ENCODE measurements at regions of chr3 and their contacts with region 1.

Region 1: GRCh38 chr3:136882572-136882971 is 20.6 kb downstream of the NCK1 start:
- DNase-seq: no peak
- ATAC-seq: peak; percentile 69
- H3K4me3 ChIP-seq: no peak overlapping the region
- H3K27ac ChIP-seq: no peak overlapping the region
- H3K4me1 ChIP-seq: peaks cover 16% of the 10 kb centered on the region
- H3K27me3 ChIP-seq: no peaks in the 10 kb centered on the region
- CTCF ChIP-seq: no peak
- EP300 ChIP-seq: no peak
- POLR2A ChIP-seq: no peak
- RAD21 ChIP-seq: no peak

Region 2: GRCh38 chr3:136577792-136578191 is 304.8 kb before region 1 on chr3:
- CTCF ChIA-PET with region 1: no interaction called
- POLR2A ChIA-PET with region 1: no interaction called
- RAD21 ChIA-PET with region 1: no interaction called
- SMC1A ChIA-PET with region 1: no interaction called
- in situ Hi-C with region 1: no loop called
- intact Hi-C with region 1: no loop called
- DNase-seq: no peak
- ATAC-seq: no peak
- H3K4me3 ChIP-seq: no peak overlapping the region
- H3K27ac ChIP-seq: no peak overlapping the region
- H3K4me1 ChIP-seq: no peaks in the 10 kb centered on the region
- H3K27me3 ChIP-seq: no peaks in the 10 kb centered on the region
- CTCF ChIP-seq: no peak
- EP300 ChIP-seq: no peak
- POLR2A ChIP-seq: no peak
- RAD21 ChIP-seq: no peak

Region 3: GRCh38 chr3:136728918-136729317 is 153.7 kb before region 1 on chr3:
- CTCF ChIA-PET with region 1: no interaction called
- POLR2A ChIA-PET with region 1: no interaction called
- RAD21 ChIA-PET with region 1: no interaction called
- SMC1A ChIA-PET with region 1: no interaction called
- in situ Hi-C with region 1: no loop called
- intact Hi-C with region 1: no loop called
- DNase-seq: no peak
- ATAC-seq: no peak; the same call in 2 of the 3 replicates
- H3K4me3 ChIP-seq: no peak overlapping the region
- H3K27ac ChIP-seq: no peak overlapping the region
- H3K4me1 ChIP-seq: peaks cover 30% of the 10 kb centered on the region
- H3K27me3 ChIP-seq: no peaks in the 10 kb centered on the region
- CTCF ChIP-seq: no peak
- EP300 ChIP-seq: no peak
- POLR2A ChIP-seq: no peak
- RAD21 ChIP-seq: no peak

Region 4: GRCh38 chr3:136899622-136900158 is 17.1 kb after region 1 on chr3:
- CTCF ChIA-PET with region 1: interaction called, 3 read pairs
- POLR2A ChIA-PET with region 1: interaction called, 4 read pairs
- RAD21 ChIA-PET with region 1: no interaction called
- SMC1A ChIA-PET with region 1: interaction called, 19 read pairs
- in situ Hi-C with region 1: no loop called
- intact Hi-C with region 1: no loop called
- DNase-seq: no peak
- ATAC-seq: no peak
- H3K4me3 ChIP-seq: no peak overlapping the region
- H3K27ac ChIP-seq: no peak overlapping the region
- H3K4me1 ChIP-seq: peaks cover 4% of the 10 kb centered on the region; the same call in 1 of the 2 replicates
- H3K27me3 ChIP-seq: no peaks in the 10 kb centered on the region
- CTCF ChIP-seq: no peak
- EP300 ChIP-seq: no peak
- POLR2A ChIP-seq: no peak
- RAD21 ChIP-seq: no peak

Measured in GM12878 (cell line).